ENCODE measurements at regions of chr7 and their contacts with region 1.

Region 1: DNA sequence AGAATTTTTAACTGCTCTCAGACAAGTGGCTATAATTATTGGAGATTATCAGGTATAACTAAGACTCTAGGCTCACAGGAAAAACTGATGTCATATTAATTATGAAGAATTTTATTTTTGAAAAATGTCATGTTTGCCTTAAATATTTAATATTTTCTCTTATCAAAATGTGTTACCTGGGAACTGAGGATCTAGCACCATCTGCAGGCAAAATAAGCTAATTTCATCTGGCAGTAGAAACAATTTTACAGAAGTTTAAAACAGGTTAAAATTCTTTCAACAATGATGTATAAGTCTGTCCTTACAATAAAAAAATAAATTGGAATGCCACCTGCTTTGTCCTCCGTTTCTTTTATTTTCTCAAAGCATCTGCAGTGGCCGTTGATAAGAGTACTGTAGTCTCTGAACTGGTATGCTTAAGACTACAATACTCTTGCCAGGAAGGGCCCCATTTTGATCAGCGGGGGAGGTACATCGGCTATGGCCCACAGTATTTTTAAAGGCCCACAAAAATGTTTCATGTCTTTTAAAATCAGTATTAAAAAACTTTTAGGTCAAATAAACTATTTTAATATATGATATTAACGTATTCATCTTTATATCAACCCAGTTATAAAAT is 81.3 kb downstream of the VWDE start:
- DNase-seq: peak; percentile 36
- H3K4me3 ChIP-seq: no peak overlapping the region
- H3K27ac ChIP-seq: no peak overlapping the region
- H3K4me1 ChIP-seq: no peaks in the 10 kb centered on the region
- H3K27me3 ChIP-seq: no peaks in the 10 kb centered on the region

Region 2: DNA sequence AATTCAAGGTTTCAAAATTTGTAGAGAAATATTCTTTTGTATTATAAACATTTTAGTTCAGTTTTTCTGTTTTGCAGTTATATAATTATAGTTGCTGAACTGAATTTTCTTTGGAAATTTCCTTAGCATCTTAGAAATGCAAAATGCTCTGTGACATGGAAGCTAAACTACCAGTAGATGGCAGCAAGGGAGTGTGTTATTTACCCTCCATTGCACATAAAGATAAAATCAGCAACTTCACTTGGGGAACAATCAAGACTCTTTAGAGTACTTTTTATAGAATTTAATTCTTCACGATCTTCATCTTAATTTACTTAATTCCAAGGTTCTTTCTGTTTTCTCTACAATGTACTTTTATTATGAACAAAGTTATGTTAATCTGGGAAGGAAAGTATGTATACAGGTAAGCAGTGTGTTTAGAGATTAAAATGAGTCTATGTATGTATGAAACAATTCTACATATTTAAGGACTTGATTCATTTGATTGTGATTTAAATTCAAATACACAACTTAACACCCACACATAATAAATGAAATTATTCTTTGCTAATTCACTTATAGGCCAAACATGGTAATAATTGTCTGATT is 894.6 kb before region 1 on chr7:
- in situ Hi-C with region 1: loop called (anchors 25 kb)
- DNase-seq: peak; percentile 80
- H3K4me3 ChIP-seq: no peak overlapping the region
- H3K27ac ChIP-seq: no peak overlapping the region
- H3K4me1 ChIP-seq: no peaks in the 10 kb centered on the region
- H3K27me3 ChIP-seq: peaks cover 4% of the 10 kb centered on the region; the same call in 1 of the 2 replicates

Region 3: GRCh38 chr7:12067141-12067831 is 255.1 kb before region 1 on chr7:
- in situ Hi-C with region 1: loop called (anchors 10 kb)
- DNase-seq: peak; percentile 55
- H3K4me3 ChIP-seq: no peak overlapping the region
- H3K27ac ChIP-seq: no peak overlapping the region
- H3K4me1 ChIP-seq: no peaks in the 10 kb centered on the region
- H3K27me3 ChIP-seq: no peaks in the 10 kb centered on the region

Region 4: DNA sequence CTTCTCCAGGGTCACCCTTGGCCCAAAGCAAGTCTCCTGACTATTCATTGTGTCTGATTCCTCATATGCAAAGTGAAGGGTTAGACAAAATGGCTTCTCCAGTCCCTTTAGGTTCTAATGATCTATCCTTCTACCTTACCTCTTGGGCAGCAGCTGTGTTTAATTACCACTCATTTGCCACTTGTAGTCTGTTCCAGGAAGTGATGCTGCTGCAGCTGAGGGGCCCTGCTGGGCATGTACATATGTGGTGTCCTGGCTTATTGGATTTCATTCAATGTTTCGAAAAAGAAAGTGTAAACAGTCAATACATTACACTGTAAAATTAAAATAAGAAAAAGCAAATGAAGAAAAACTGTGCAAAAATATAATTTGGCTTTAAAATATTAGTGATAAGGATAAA is 284.7 kb after region 1 on chr7:
- in situ Hi-C with region 1: no loop called
- DNase-seq: no peak
- H3K4me3 ChIP-seq: no peak overlapping the region
- H3K27ac ChIP-seq: no peak overlapping the region
- H3K4me1 ChIP-seq: no peaks in the 10 kb centered on the region
- H3K27me3 ChIP-seq: no peaks in the 10 kb centered on the region